GM23248 (cell line): ENCODE measurements at regions of chr11 and their contacts with region 1.

Region 1: DNA sequence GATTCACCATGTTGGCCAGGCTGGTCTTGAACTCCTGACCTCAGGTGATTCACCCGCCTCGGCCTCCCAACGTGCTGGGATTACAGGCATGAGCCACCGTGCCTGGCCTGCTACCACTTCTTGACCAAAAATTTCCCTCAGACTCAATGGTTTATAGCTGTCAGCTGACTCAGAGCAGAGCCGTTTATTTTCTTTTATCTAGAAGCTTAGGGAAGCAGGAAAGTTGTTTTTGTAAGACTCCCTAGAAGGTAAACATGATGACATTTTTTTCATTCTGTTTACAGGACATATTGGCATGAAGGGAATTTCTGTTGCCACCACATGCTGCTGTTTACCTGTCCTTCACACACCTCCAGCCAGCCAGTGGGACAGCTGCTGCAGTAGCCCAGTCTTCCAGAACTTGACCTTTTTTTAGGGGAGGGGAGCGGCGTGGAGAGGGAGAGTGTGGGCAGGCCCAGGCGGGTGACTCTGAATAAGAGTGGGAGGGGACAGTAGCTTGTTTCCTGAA is 56.1 kb upstream of the PTPRJ start:
- DNase-seq: peak; percentile 88
- H3K4me3 ChIP-seq: no peak overlapping the region
- H3K27ac ChIP-seq: peak overlapping the region; percentile 80
- H3K4me1 ChIP-seq: peaks cover 18% of the 10 kb centered on the region
- H3K27me3 ChIP-seq: no peaks in the 10 kb centered on the region

Region 2: GRCh38 chr11:47847892-47848635 is 76.2 kb before region 1 on chr11 and contains the start of gene NUP160:
- in situ Hi-C with region 1: loop called (anchors 10 kb)
- DNase-seq: peak; percentile 82
- H3K4me3 ChIP-seq: peak within 1 kb of the TSS; percentile 92
- H3K27ac ChIP-seq: peak within 1 kb of the TSS; percentile 52
- H3K4me1 ChIP-seq: peaks cover 7% of the 10 kb centered on the region
- H3K27me3 ChIP-seq: no peaks in the 10 kb centered on the region
- total RNA-seq, gene NUP160: 21.0 and 23.1 TPM in 2 replicates

Region 3: DNA sequence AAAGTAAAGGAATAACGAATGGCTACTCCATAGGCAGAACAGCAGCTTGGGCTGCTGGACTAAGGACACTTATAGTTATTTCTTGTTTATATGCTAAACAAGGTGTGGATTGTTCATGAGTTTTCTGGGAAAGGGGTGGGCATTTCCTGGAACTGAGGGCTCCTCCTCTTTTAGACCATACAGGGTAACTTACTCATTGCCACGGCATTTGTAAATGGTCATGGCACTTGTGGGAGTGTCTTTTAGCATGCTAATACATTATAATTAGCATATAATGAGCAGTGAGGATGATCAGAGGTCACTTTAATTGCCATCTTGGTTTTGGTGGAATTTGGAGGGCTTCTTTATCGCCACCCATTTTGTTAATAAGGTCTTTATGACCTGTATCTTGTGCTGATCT is 346.4 kb after region 1 on chr11:
- in situ Hi-C with region 1: no loop called
- DNase-seq: no peak
- H3K4me3 ChIP-seq: no peak overlapping the region
- H3K27ac ChIP-seq: no peak overlapping the region
- H3K4me1 ChIP-seq: no peaks in the 10 kb centered on the region
- H3K27me3 ChIP-seq: no peaks in the 10 kb centered on the region